K562 (cell line): ENCODE measurements at regions of chr9 and their contacts with region 1.

Region 1: GRCh38 chr9:109792951-109793546 is 13.1 kb downstream of the PALM2AKAP2 start:
- DNase-seq: no peak
- ATAC-seq: no peak
- H3K4me3 ChIP-seq: no peak overlapping the region
- H3K27ac ChIP-seq: no peak overlapping the region
- H3K4me1 ChIP-seq: no peaks in the 10 kb centered on the region
- H3K27me3 ChIP-seq: no peaks in the 10 kb centered on the region
- CTCF ChIP-seq: no peak
- EP300 ChIP-seq: no peak
- POLR2A ChIP-seq: no peak
- RAD21 ChIP-seq: no peak

Region 2: DNA sequence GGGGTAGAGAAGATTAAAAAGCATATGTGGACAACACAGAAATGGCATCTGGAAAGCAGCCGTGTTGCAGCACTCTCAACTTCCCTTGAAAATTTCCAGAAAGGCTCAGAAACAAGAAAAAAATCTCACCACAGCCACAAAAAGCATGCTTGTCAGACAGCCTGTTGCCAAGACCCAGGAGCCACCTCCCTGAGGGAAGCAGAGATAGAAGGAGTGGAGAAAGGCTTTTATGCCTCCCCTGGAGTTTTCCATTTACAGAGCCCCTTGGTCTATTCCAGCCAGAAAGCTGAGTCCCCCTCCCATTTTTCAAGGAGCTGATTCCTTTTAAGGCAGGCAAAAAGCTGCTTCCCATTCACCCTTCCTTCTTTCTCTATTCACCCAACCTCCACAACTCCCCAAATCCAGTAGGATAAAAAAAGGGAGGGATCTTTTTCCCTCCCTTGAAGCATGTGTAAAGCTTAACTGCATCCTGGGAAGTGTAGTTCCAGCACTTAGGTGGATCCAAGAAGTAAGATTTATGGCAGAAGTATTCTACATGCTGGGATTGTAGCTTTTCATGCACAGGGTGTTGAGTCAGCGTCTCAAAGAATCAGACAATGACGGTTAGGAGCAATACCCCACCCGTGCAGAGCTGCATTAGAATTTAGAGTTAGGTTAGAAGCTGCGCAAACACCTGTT is 50.2 kb before region 1 on chr9:
- CTCF ChIA-PET with region 1: no interaction called
- POLR2A ChIA-PET with region 1: no interaction called
- in situ Hi-C with region 1: no loop called
- intact Hi-C with region 1: loop called (anchors 5 kb)
- DNase-seq: no peak
- ATAC-seq: no peak
- H3K4me3 ChIP-seq: no peak overlapping the region
- H3K27ac ChIP-seq: no peak overlapping the region
- H3K4me1 ChIP-seq: no peaks in the 10 kb centered on the region
- H3K27me3 ChIP-seq: no peaks in the 10 kb centered on the region; a peak in 1 of 5 replicates
- CTCF ChIP-seq: no peak
- EP300 ChIP-seq: no peak
- POLR2A ChIP-seq: no peak
- RAD21 ChIP-seq: no peak